ENCODE measurements at regions of chr2 and their contacts with region 1.

Region 1: GRCh38 chr2:85354286-85355072 is at the starts of genes ELMOD3 and RETSAT:
- DNase-seq: peak; percentile 100
- H3K4me3 Mint-ChIP-seq: peak within 1 kb of the TSS; percentile 96
- H3K27ac Mint-ChIP-seq: peak within 1 kb of the TSS; percentile 96
- H3K4me1 Mint-ChIP-seq: peaks cover 46% of the 10 kb centered on the region
- H3K27me3 Mint-ChIP-seq: no peaks in the 10 kb centered on the region
- total RNA-seq, gene ELMOD3: 19.4 to 22.1 TPM
- total RNA-seq, gene RETSAT: 24.7 to 24.9 TPM

Region 2: GRCh38 chr2:85367180-85367579 is 12.7 kb after region 1 on chr2:
- CTCF ChIA-PET with region 1: interaction called, 27 read pairs
- POLR2A ChIA-PET with region 1: no interaction called
- DNase-seq: no peak
- H3K4me3 Mint-ChIP-seq: no peak overlapping the region
- H3K27ac Mint-ChIP-seq: no peak overlapping the region
- H3K4me1 Mint-ChIP-seq: no peaks in the 10 kb centered on the region
- H3K27me3 Mint-ChIP-seq: no peaks in the 10 kb centered on the region

Measured in activated CD4-positive, alpha-beta T cell treated with anti-CD3 and anti-CD28 coated beads, Interleukin-2, amount 10 ng/mL, durations not matched to agents 7 days and 5 days (primary cell).